Activated CD4-positive, alpha-beta memory T cell treated with anti-CD3 and anti-CD28 coated beads for 36 hours (primary cell): ENCODE measurements at regions of chr4 and their contacts with region 1.

Region 1: DNA sequence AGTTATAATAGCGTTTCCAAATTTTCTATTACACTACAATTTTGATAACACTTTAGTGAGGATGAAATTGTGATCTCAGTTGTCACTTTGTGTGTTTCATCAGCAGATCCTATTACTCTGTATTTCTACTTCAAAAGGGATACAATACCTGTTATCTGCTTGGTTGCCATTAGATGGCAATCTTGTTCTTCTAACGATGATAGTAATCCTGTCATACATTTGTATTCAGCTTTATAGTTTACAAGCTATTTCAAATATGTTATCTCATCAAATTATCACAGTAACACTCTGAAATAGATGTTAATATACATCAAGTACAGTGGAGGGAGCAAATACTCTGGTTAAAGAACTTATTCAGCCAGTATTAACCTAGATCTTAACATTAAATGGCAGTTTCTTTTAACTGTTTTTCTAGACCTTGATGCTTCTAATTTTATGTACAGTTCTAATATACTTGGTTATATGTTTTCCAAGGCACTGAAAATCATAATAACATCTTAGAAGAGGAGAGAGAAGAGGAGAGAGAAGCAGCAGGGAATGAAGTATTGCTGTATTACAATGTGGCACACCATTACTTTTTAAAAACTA is 292.0 kb downstream of the CCSER1 start:
- DNase-seq: no peak
- H3K4me3 Mint-ChIP-seq: no peak overlapping the region
- H3K27ac Mint-ChIP-seq: no peak overlapping the region
- H3K4me1 Mint-ChIP-seq: no peaks in the 10 kb centered on the region
- H3K27me3 Mint-ChIP-seq: no peaks in the 10 kb centered on the region

Region 2: GRCh38 chr4:92387459-92388069 is 1968.3 kb after region 1 on chr4:
- CTCF ChIA-PET with region 1: interaction called, 3 read pairs
- POLR2A ChIA-PET with region 1: no interaction called
- intact Hi-C with region 1: loop called (anchors 5 kb)
- DNase-seq: no peak
- H3K4me3 Mint-ChIP-seq: no peak overlapping the region
- H3K27ac Mint-ChIP-seq: no peak overlapping the region
- H3K4me1 Mint-ChIP-seq: no peaks in the 10 kb centered on the region
- H3K27me3 Mint-ChIP-seq: no peaks in the 10 kb centered on the region